Psoas muscle (tissue), 8 donors: ENCODE measurements at regions of chr5 and their contacts with region 1.

Region 1: DNA sequence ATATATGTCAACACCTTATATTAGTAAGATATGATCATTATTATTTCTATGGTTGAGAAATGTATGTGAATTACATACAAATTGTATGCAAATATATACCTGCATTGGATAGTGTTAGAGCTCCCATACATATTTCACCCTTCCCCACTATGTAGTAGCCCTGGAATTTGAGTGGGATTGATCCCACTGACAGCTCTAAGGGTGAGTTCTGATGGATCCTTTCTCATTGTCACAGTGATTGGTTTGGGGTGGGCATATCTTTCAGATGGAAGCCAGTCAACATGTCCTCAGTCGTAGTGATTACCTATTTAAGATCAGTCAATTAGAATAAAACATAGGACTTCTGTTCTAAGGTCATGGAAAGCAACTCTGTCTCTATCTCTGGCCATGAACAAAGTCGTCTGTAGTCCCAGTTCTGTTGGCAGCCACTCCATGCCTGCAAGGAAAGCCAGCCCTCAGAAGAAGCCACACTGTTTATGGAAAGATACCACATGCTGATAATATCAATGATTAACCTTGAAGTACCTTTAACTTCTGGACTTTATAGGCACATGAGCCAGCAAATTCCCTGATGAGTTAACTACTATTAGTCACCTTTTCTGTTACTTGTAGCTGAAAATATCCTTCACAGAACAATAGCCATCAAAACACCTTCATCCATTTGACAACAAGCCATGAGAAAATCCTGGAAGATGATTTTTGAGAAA is 5.1 kb upstream of the CCDC192 start:
- DNase-seq: no peak
- ATAC-seq: no peak
- H3K4me3 ChIP-seq: peak overlapping the region; percentile 41
- H3K27ac ChIP-seq: peak overlapping the region; percentile 86
- H3K4me1 ChIP-seq: peaks cover 24% of the 10 kb centered on the region
- H3K27me3 ChIP-seq: no peaks in the 10 kb centered on the region
- CTCF ChIP-seq: no peak

Region 2: DNA sequence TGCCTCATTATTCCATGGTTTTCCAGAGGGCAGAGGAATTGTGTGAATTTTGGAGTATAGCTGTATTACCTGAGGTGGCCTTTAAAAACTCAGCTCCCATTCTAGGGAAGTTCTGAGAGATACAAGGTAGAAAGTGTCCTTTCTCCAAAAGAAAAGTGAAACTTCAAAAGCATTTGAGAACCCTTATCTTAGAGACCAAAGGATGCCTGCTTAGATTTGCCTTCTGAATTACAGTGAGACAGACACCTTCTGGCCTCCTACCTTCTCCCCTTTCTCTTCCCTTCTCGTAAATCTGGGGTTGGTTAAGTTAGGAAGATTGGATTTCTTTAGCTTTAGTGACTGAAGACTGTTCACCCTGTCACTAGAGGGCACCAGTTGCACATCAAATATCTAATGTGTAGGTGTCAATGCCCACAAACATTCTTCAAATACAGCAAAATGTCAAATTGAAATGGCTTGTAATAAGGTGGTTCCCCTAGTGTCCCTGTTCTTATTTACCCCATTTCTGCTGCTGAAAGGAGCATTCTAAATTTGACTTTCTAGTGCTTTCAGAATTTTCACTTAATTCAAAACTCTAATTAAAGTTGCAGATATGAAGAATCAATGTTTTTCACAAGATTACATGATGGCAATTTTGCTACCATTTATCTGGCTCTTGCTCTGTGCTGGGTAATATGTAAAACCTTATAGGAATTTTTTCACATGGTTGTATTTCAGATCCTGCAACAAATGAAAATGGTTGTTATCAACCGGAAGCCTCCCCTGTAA is 133.9 kb before region 1 on chr5:
- intact Hi-C with region 1: loop called in 1 of 2 experiments (anchors 5 kb)
- DNase-seq: no peak
- ATAC-seq: peak; percentile 64 to 86 (median 74)
- H3K4me3 ChIP-seq: no peak overlapping the region
- H3K27ac ChIP-seq: peak overlapping the region; percentile 7
- H3K4me1 ChIP-seq: peaks cover 31% of the 10 kb centered on the region
- H3K27me3 ChIP-seq: no peaks in the 10 kb centered on the region
- CTCF ChIP-seq: peak; percentile 74

Region 3: DNA sequence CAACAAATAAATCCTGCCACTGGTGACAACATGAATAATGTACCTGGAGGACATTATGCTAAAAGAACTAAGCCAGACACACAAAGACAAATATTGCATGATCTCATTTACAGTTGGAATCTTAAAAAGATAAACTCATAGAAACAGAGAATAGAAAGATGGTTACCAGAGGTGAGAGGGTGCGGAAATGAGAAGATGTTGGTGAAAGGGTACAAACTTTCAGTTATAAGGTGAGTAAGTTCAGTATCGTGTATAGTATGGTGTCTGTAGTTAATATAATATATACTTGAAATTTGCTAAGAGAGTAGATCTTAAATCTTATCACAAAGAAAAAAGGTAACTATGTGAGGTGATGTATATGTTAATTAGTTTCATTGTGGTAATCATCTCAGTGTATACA is 117.3 kb before region 1 on chr5:
- intact Hi-C with region 1: loop called (anchors 5 to 10 kb)
- DNase-seq: no peak
- ATAC-seq: no peak
- H3K4me3 ChIP-seq: no peak overlapping the region
- H3K27ac ChIP-seq: no peak overlapping the region
- H3K4me1 ChIP-seq: peaks cover 13% of the 10 kb centered on the region
- H3K27me3 ChIP-seq: no peaks in the 10 kb centered on the region
- CTCF ChIP-seq: no peak

Region 4: DNA sequence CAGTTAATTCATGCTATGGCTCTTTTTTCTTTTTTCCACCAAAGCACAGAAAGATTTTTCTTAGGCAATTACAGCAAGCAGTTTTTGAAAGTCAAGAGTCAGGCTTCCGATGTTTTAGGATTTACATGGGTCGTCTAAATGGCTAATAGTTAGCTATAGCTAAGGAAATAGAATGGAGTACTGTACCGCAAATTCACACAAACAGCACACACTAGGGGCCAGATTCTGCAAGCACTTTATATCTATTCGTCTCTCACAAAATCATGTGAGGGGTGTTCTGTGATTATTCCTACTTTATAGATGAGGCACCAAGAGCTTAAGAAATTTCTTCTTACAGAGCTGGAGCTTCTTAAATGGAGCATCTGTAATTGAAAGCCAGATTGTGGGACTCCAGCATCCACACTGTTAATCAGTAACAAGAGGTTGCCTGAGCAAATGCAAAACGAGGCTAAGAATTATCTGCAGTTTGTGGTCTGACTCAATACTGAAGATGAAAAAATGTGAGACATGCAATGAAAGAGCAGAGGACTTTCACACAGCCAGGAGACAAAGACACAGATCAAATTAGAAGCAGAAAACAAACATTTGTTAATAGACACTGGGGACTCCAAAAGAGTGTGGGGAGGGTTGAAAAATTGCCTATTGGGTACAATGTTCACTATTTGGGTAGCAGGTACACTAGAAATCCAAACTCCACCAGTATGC is 111.8 kb before region 1 on chr5:
- intact Hi-C with region 1: loop called (anchors 5 to 10 kb)
- DNase-seq: no peak
- ATAC-seq: no peak
- H3K4me3 ChIP-seq: no peak overlapping the region
- H3K27ac ChIP-seq: no peak overlapping the region
- H3K4me1 ChIP-seq: peaks cover 13% of the 10 kb centered on the region
- H3K27me3 ChIP-seq: no peaks in the 10 kb centered on the region
- CTCF ChIP-seq: no peak

Region 5: GRCh38 chr5:127615916-127616315 is 82.1 kb before region 1 on chr5:
- intact Hi-C with region 1: no loop called
- DNase-seq: no peak
- ATAC-seq: no peak
- H3K4me3 ChIP-seq: no peak overlapping the region
- H3K27ac ChIP-seq: no peak overlapping the region
- H3K4me1 ChIP-seq: no peaks in the 10 kb centered on the region
- H3K27me3 ChIP-seq: no peaks in the 10 kb centered on the region
- CTCF ChIP-seq: no peak

Region 6: GRCh38 chr5:127660047-127660733 is 37.9 kb before region 1 on chr5:
- intact Hi-C with region 1: loop called in 1 of 2 experiments (anchors 5 kb)
- DNase-seq: no peak
- ATAC-seq: peak; percentile 72 to 89 (median 89)
- H3K4me3 ChIP-seq: no peak overlapping the region
- H3K27ac ChIP-seq: peak overlapping the region; percentile 83
- H3K4me1 ChIP-seq: peaks cover 28% of the 10 kb centered on the region
- H3K27me3 ChIP-seq: no peaks in the 10 kb centered on the region
- CTCF ChIP-seq: no peak

Region 7: GRCh38 chr5:127934791-127935256 is 236.8 kb after region 1 on chr5:
- intact Hi-C with region 1: no loop called
- DNase-seq: no peak
- ATAC-seq: no peak
- H3K4me3 ChIP-seq: no peak overlapping the region
- H3K27ac ChIP-seq: no peak overlapping the region
- H3K4me1 ChIP-seq: no peaks in the 10 kb centered on the region
- H3K27me3 ChIP-seq: no peaks in the 10 kb centered on the region
- CTCF ChIP-seq: no peak

Region 8: DNA sequence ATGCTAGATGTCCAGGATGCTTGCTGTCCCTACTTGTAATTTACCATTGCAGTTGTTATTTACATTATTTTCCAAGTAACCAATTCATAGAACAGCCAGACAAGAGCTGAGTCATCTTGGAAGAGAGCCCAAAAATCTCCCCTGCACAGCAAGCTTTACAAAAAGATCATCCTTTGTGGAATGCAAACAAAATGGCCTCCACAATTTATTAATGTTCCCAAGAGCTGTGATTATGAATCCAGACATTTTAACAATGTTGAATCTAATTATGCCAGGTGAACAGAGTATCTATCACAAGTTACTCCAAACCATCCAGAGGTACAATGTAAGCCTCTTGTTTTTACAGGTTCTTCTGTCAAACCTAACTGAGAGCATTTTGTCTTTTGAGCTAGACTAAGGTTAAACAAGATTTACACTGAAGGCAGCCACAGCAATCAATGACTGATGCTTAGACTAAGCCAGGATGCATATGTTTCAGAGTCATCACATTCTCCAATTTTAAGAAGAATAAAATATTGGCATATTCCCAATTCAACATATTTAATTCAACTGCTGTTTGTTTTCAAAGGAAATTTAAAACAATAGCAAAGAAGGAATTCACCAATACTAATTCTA is 290.2 kb after region 1 on chr5:
- intact Hi-C with region 1: no loop called
- DNase-seq: no peak
- ATAC-seq: no peak
- H3K4me3 ChIP-seq: no peak overlapping the region
- H3K27ac ChIP-seq: no peak overlapping the region
- H3K4me1 ChIP-seq: no peaks in the 10 kb centered on the region
- H3K27me3 ChIP-seq: no peaks in the 10 kb centered on the region
- CTCF ChIP-seq: no peak